ENCODE measurements at regions of chr3 and their contacts with region 1.

Region 1: GRCh38 chr3:4493014-4493940 is at the start of gene ITPR1:
- DNase-seq: peak; percentile 99
- ATAC-seq: peak; percentile 81
- H3K4me3 ChIP-seq: peak within 1 kb of the TSS; percentile 80
- H3K27ac ChIP-seq: peak within 1 kb of the TSS; percentile 78
- H3K4me1 ChIP-seq: peaks cover 29% of the 10 kb centered on the region
- H3K27me3 ChIP-seq: no peaks in the 10 kb centered on the region
- CTCF ChIP-seq: no peak
- total RNA-seq, gene ITPR1: 48.5 and 57.5 TPM in 2 replicates

Region 2: GRCh38 chr3:4350789-4351163 is 142.5 kb before region 1 on chr3:
- CTCF ChIA-PET with region 1: interaction called, 7 read pairs
- POLR2A ChIA-PET with region 1: interaction called, 9 read pairs
- intact Hi-C with region 1: loop called (anchors 1 kb)
- DNase-seq: peak; percentile 76
- ATAC-seq: peak; percentile 78
- H3K4me3 ChIP-seq: no peak overlapping the region
- H3K27ac ChIP-seq: no peak overlapping the region
- H3K4me1 ChIP-seq: peaks cover 10% of the 10 kb centered on the region
- H3K27me3 ChIP-seq: no peaks in the 10 kb centered on the region
- CTCF ChIP-seq: peak; percentile 93

Region 3: DNA sequence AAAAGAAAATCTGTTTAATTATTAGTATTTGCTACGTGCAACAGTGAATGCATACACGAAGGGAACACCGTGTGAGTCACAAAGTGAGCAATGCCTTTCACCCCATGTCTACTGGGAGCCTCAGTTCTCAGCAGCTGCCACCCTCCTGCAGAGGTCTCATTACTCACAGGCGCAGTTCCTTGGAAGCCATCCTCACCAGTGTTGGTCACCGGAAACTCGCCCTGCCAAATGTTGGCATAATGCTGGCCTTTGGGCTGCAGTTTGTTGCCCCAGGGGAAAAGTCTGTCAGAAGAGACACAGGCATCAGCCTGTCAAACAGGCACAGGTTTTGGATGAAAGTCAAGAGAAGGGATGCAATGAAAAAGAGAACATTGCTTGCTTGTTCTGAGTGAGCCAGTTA is 76.3 kb before region 1 on chr3:
- CTCF ChIA-PET with region 1: no interaction called
- POLR2A ChIA-PET with region 1: interaction called, 3 read pairs
- intact Hi-C with region 1: loop called (anchors 1 kb)
- DNase-seq: peak; percentile 100
- ATAC-seq: peak; percentile 86
- H3K4me3 ChIP-seq: peak overlapping the region; percentile 43; the same call in 1 of the 2 replicates
- H3K27ac ChIP-seq: peak overlapping the region; percentile 99
- H3K4me1 ChIP-seq: peaks cover 72% of the 10 kb centered on the region
- H3K27me3 ChIP-seq: no peaks in the 10 kb centered on the region
- CTCF ChIP-seq: no peak

Region 4: GRCh38 chr3:4426601-4427344 is 66.5 kb before region 1 on chr3:
- CTCF ChIA-PET with region 1: no interaction called
- POLR2A ChIA-PET with region 1: no interaction called
- intact Hi-C with region 1: loop called (anchors 1 kb)
- DNase-seq: peak; percentile 93
- ATAC-seq: peak; percentile 96
- H3K4me3 ChIP-seq: peak overlapping the region; percentile 11; the same call in 1 of the 2 replicates
- H3K27ac ChIP-seq: peak overlapping the region; percentile 76
- H3K4me1 ChIP-seq: peaks cover 25% of the 10 kb centered on the region
- H3K27me3 ChIP-seq: no peaks in the 10 kb centered on the region
- CTCF ChIP-seq: no peak

Region 5: GRCh38 chr3:4466741-4467521 is 26.3 kb before region 1 on chr3 and contains the start of gene SUMF1:
- CTCF ChIA-PET with region 1: interaction called, 6 read pairs
- POLR2A ChIA-PET with region 1: interaction called, 23 read pairs
- intact Hi-C with region 1: loop called (anchors 1 kb)
- DNase-seq: peak; percentile 83
- ATAC-seq: peak; percentile 98
- H3K4me3 ChIP-seq: peak within 1 kb of the TSS; percentile 79
- H3K27ac ChIP-seq: peak within 1 kb of the TSS; percentile 63
- H3K4me1 ChIP-seq: no peaks in the 10 kb centered on the region
- H3K27me3 ChIP-seq: no peaks in the 10 kb centered on the region
- CTCF ChIP-seq: no peak
- total RNA-seq, gene SUMF1: 79.1 and 81.5 TPM in 2 replicates

Region 6: DNA sequence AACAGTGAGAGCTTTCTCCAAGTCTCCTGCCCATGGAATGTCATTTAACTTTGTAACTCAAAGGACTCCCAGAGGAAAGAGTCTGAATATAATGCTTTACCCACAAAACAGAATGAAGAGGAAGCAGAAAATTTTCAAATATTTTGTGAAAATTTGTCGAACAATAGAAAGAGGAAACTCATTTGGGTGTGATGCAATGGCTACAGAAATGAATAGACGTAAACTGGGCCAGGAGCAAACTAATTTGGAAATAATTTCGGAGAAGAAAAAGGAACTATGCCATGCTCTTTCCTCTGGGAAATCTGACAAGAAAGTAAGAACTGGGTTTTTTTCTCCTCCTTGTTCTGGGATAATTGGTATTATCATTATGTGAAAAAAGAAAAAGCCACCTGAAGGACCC is 15.0 kb before region 1 on chr3:
- CTCF ChIA-PET with region 1: no interaction called
- POLR2A ChIA-PET with region 1: no interaction called
- intact Hi-C with region 1: no loop called
- DNase-seq: no peak
- ATAC-seq: no peak
- H3K4me3 ChIP-seq: no peak overlapping the region
- H3K27ac ChIP-seq: no peak overlapping the region
- H3K4me1 ChIP-seq: peaks cover 22% of the 10 kb centered on the region
- H3K27me3 ChIP-seq: no peaks in the 10 kb centered on the region
- CTCF ChIP-seq: no peak

Region 7: DNA sequence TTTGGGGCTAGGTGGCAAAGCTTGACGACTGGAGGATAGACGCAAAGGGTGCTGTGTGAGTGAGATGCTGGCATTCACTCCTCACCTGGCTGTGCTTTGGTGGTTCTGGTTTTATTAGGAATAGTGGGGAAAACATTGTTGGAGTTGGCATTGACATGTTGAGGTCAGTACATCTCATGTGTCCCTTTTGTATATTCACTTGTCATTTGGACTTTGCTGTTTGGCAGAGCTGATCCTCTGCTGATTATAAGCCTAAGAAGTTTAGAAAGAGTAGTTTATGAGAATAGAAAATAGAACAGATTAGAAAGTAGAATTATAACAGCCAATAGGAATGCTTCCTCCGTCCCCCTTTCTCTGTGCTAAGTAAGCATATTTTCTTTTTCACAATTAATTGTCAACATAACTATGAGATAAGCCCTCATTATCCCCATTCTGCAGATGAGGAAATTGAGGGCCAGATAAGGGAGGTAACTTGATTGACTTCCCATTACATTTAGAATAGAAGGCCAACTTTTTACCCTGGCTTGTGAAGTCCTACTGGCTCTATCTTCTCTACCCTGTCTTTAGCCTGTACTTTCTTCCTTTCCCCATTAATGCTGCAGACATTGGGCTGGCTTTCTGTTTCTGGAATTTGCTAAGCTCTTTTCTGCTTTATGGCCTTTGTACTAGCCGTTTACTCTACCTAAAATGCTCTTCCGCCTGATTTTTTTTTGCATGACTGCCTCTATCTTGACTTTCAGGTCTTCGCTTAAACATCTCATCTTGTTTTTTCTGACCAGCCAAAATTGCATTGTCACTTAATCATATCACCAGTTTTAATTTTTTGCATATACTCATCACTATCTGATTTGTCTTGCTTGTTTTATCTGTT is 12.6 kb after region 1 on chr3:
- CTCF ChIA-PET with region 1: no interaction called
- POLR2A ChIA-PET with region 1: no interaction called
- intact Hi-C with region 1: no loop called
- DNase-seq: no peak
- ATAC-seq: no peak
- H3K4me3 ChIP-seq: no peak overlapping the region
- H3K27ac ChIP-seq: no peak overlapping the region
- H3K4me1 ChIP-seq: no peaks in the 10 kb centered on the region
- H3K27me3 ChIP-seq: no peaks in the 10 kb centered on the region
- CTCF ChIP-seq: no peak

Region 8: GRCh38 chr3:4565806-4566501 is 72.7 kb after region 1 on chr3:
- CTCF ChIA-PET with region 1: no interaction called
- POLR2A ChIA-PET with region 1: interaction called, 3 read pairs
- intact Hi-C with region 1: loop called (anchors 1 kb)
- DNase-seq: peak; percentile 84
- ATAC-seq: peak; percentile 82
- H3K4me3 ChIP-seq: peak overlapping the region; percentile 8; the same call in 1 of the 2 replicates
- H3K27ac ChIP-seq: peak overlapping the region; percentile 87
- H3K4me1 ChIP-seq: peaks cover 50% of the 10 kb centered on the region
- H3K27me3 ChIP-seq: no peaks in the 10 kb centered on the region
- CTCF ChIP-seq: no peak